Stomach (tissue), 19 donors: ENCODE measurements at regions of chr19 and their contacts with region 1.

Region 1: DNA sequence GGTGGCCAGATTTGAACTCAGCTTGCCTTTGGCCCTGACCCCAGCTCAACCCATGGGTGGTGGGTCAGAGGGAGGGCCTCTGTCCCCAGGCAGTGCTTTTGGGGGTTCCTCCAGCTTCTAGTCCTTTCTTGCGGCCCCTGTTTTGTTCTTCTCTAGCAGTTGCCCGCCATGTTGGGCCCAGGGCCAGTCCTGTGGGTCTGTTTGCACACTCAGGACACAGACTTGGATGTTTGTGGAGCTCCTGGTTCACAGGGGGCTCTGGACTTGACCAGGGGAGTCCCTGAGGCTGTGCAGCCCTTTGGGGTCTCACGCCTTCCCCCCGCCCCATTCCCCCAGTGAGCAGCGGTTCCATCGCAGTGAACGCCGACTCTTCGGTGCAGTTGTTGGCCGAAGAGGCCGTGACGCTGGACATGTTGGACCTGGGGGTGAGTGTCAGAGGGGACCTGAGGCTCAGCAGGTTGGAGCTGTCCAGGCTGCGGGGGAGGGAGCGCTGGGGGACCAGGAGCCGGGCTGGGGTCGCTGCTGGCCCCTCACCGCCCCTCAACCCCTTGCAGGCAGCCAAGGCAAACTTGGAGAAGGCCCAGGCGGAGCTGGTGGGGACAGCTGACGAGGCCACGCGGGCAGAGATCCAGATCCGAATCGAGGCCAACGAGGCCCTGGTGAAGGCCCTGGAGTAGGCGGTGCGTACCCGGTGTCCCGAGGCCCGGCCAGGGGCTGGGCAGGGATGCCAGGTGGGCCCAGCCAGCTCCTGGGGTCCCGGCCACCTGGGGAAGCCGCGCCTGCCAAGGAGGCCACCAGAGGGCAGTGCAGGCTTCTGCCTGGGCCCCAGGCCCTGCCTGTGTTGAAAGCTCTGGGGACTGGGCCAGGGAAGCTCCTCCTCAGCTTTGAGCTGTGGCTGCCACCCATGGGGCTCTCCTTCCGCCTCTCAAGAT is 2.5 kb downstream of the ATP5F1D start:
- DNase-seq: peak; percentile 91 to 95
- H3K4me3 ChIP-seq: peak overlapping the region in 3 of 4 donors; percentile 12 to 84 (median 28)
- H3K27ac ChIP-seq: peak overlapping the region; percentile 80 to 100 (median 95)
- H3K4me1 ChIP-seq: peaks cover 66 to 87% (median 85%) of the 10 kb centered on the region in 4 donors
- H3K27me3 ChIP-seq: no peaks in the 10 kb centered on the region
- CTCF ChIP-seq: peak in 6 of 7 experiments; percentile 19 to 97 (median 94)
- EP300 ChIP-seq: no peak
- POLR2A ChIP-seq: no peak

Region 2: GRCh38 chr19:1016647-1017114 is 227.3 kb before region 1 on chr19:
- intact Hi-C with region 1: no loop called
- DNase-seq: no peak
- H3K4me3 ChIP-seq: peak overlapping the region in 3 of 4 donors; percentile 2 to 32 (median 3)
- H3K27ac ChIP-seq: peak overlapping the region; percentile 34 to 99 (median 57)
- H3K4me1 ChIP-seq: peaks cover 49 to 74% (median 64%) of the 10 kb centered on the region in 4 donors
- H3K27me3 ChIP-seq: no peaks in the 10 kb centered on the region
- CTCF ChIP-seq: no peak
- EP300 ChIP-seq: no peak
- POLR2A ChIP-seq: no peak

Region 3: GRCh38 chr19:1074544-1075283 is 169.3 kb before region 1 on chr19:
- intact Hi-C with region 1: no loop called
- DNase-seq: peak; percentile 73 to 94
- H3K4me3 ChIP-seq: peak overlapping the region; percentile 5 to 37 (median 26)
- H3K27ac ChIP-seq: peak overlapping the region; percentile 64 to 81 (median 73)
- H3K4me1 ChIP-seq: peaks cover 15 to 78% (median 57%) of the 10 kb centered on the region in 4 donors
- H3K27me3 ChIP-seq: peaks cover 0 to 29% (median 10%) of the 10 kb centered on the region in 3 donors
- CTCF ChIP-seq: no peak
- EP300 ChIP-seq: no peak
- POLR2A ChIP-seq: no peak

Region 4: GRCh38 chr19:1103708-1104310 is 140.2 kb before region 1 on chr19 and contains the start of gene GPX4:
- intact Hi-C with region 1: no loop called
- DNase-seq: peak; percentile 100
- H3K4me3 ChIP-seq: peak within 1 kb of the TSS; percentile 71 to 89 (median 85)
- H3K27ac ChIP-seq: peak within 1 kb of the TSS; percentile 98 to 100 (median 99)
- H3K4me1 ChIP-seq: peaks cover 40 to 81% (median 66%) of the 10 kb centered on the region in 4 donors
- H3K27me3 ChIP-seq: no peaks in the 10 kb centered on the region
- CTCF ChIP-seq: no peak
- EP300 ChIP-seq: no peak
- POLR2A ChIP-seq: peak in 2 of 4 donors; percentile 53 to 65
- total RNA-seq, gene GPX4: 90.0 to 710 (median 158) TPM

Region 5: GRCh38 chr19:1266116-1266915 is 22.3 kb after region 1 on chr19:
- intact Hi-C with region 1: loop called (anchors 2 kb)
- DNase-seq: peak; percentile 89 to 93
- H3K4me3 ChIP-seq: peak overlapping the region; percentile 44 to 61 (median 50)
- H3K27ac ChIP-seq: peak overlapping the region; percentile 80 to 100 (median 100)
- H3K4me1 ChIP-seq: peaks cover 74 to 89% (median 84%) of the 10 kb centered on the region in 4 donors
- H3K27me3 ChIP-seq: no peaks in the 10 kb centered on the region
- CTCF ChIP-seq: no peak
- EP300 ChIP-seq: no peak
- POLR2A ChIP-seq: no peak